CD8-positive, alpha-beta T cell (primary cell): ENCODE measurements at regions of chr11 and their contacts with region 1.

Region 1: DNA sequence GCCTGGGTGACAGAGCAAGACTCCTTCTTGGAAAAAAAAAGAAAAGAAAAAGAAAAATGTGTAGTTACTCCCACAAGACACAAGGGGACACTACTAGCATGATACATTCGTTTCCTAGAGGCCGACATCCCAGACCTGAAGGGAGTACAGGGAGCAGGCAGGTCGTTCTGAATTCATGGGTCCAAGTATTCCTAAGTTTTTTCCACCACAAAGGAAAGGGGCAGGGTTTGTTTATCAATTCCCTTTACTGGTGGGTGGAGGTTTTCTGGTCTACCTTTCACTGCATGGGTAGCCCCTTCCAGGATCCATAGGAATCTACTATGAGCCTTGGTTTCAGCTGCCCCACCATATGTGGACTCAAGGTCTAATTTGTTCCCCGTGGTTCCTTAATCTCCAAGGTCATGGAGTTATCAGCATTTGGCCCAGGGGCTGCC is 11.8 kb downstream of the TIGD3 start:
- DNase-seq: peak in 3 of 9 experiments; percentile 31 to 80 (median 70)
- ATAC-seq: peak; percentile 92
- H3K4me3 ChIP-seq: no peak overlapping the region
- H3K4me3 Mint-ChIP-seq: no peak overlapping the region
- H3K27ac ChIP-seq: no peak overlapping the region
- H3K27ac Mint-ChIP-seq: no peak overlapping the region
- H3K4me1 ChIP-seq: peaks cover 6% of the 10 kb centered on the region
- H3K4me1 Mint-ChIP-seq: peaks cover 5% of the 10 kb centered on the region
- H3K27me3 ChIP-seq: no peaks in the 10 kb centered on the region
- H3K27me3 Mint-ChIP-seq: no peaks in the 10 kb centered on the region
- CTCF ChIP-seq: peak; percentile 81

Region 2: GRCh38 chr11:65013692-65014145 is 352.6 kb before region 1 on chr11:
- CTCF ChIA-PET with region 1: no interaction called
- POLR2A ChIA-PET with region 1: no interaction called
- intact Hi-C with region 1: no loop called
- DNase-seq: peak; percentile 74 to 95 (median 89)
- ATAC-seq: peak; percentile 91
- H3K4me3 ChIP-seq: peak overlapping the region; percentile 73 to 94
- H3K4me3 Mint-ChIP-seq: peak overlapping the region; percentile 88
- H3K27ac ChIP-seq: peak overlapping the region; percentile 87 to 100
- H3K27ac Mint-ChIP-seq: peak overlapping the region; percentile 96
- H3K4me1 ChIP-seq: peaks cover 24% of the 10 kb centered on the region
- H3K4me1 Mint-ChIP-seq: peaks cover 24% of the 10 kb centered on the region
- H3K27me3 ChIP-seq: no peaks in the 10 kb centered on the region
- H3K27me3 Mint-ChIP-seq: no peaks in the 10 kb centered on the region
- CTCF ChIP-seq: peak; percentile 58

Region 3: DNA sequence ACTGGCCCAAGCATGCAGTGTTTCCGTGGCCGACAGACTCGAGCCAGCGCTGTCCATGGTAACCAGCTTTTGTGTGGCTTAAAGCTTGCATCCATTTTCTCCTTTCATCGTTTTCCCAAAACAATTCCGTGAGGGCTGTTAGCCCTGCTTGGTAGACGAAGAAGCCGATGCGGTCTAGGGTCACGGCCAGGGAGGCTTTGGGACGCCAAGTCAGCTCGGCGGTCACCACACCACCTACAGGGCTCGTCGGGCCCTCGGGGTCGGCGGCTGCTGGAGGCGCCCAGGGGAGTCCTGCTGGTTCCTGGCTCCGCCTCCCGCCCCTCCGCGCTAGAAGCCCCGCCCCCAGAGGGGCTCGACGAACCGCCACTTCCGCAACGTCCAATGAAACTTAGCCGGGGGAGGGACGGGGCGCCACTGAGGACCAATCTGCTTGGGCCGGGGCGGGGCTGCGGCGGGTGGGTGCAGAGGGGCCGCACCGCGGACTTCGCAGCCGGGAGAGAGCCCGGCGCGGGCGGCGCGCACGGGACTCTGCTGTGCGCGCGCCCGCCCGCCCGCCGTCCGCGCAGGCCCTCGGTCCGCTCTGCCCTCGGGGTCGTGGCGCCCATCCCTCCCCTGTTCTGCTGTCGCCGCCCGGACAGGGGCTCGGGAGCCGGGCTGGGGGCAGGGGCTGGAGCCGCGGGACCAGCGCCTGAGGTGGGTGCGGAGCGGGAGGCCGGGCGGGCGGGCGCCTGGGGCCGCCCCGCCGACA is 11.9 kb before region 1 on chr11 and contains the start of gene TIGD3:
- CTCF ChIA-PET with region 1: interaction called, 12 read pairs
- POLR2A ChIA-PET with region 1: no interaction called
- intact Hi-C with region 1: no loop called
- DNase-seq: peak; percentile 94 to 99 (median 98)
- ATAC-seq: peak; percentile 97
- H3K4me3 ChIP-seq: peak within 1 kb of the TSS; percentile 49 to 51
- H3K4me3 Mint-ChIP-seq: peak within 1 kb of the TSS; percentile 91
- H3K27ac ChIP-seq: peak within 1 kb of the TSS in 1 of 2 experiments; percentile 58
- H3K27ac Mint-ChIP-seq: peak within 1 kb of the TSS; percentile 81
- H3K4me1 ChIP-seq: peaks cover 6% of the 10 kb centered on the region
- H3K4me1 Mint-ChIP-seq: peaks cover 13% of the 10 kb centered on the region
- H3K27me3 ChIP-seq: no peaks in the 10 kb centered on the region
- H3K27me3 Mint-ChIP-seq: no peaks in the 10 kb centered on the region
- CTCF ChIP-seq: no peak
- total RNA-seq, gene TIGD3: 0.35 to 0.75 TPM

Region 4: GRCh38 chr11:65382033-65382807 is 15.9 kb after region 1 on chr11 and contains the start of gene SLC25A45:
- CTCF ChIA-PET with region 1: interaction called, 4 read pairs
- POLR2A ChIA-PET with region 1: no interaction called
- intact Hi-C with region 1: loop called in 1 of 2 experiments (anchors 2 kb)
- DNase-seq: peak; percentile 77 to 96 (median 92)
- ATAC-seq: peak; percentile 83
- H3K4me3 ChIP-seq: peak within 1 kb of the TSS; percentile 60 to 98
- H3K4me3 Mint-ChIP-seq: peak within 1 kb of the TSS; percentile 87
- H3K27ac ChIP-seq: peak within 1 kb of the TSS; percentile 97 to 100
- H3K27ac Mint-ChIP-seq: peak within 1 kb of the TSS; percentile 99
- H3K4me1 ChIP-seq: peaks cover 54% of the 10 kb centered on the region
- H3K4me1 Mint-ChIP-seq: peaks cover 42% of the 10 kb centered on the region
- H3K27me3 ChIP-seq: no peaks in the 10 kb centered on the region
- H3K27me3 Mint-ChIP-seq: no peaks in the 10 kb centered on the region
- CTCF ChIP-seq: peak; percentile 81
- total RNA-seq, gene SLC25A45: 27.8 to 29.6 TPM

Region 5: DNA sequence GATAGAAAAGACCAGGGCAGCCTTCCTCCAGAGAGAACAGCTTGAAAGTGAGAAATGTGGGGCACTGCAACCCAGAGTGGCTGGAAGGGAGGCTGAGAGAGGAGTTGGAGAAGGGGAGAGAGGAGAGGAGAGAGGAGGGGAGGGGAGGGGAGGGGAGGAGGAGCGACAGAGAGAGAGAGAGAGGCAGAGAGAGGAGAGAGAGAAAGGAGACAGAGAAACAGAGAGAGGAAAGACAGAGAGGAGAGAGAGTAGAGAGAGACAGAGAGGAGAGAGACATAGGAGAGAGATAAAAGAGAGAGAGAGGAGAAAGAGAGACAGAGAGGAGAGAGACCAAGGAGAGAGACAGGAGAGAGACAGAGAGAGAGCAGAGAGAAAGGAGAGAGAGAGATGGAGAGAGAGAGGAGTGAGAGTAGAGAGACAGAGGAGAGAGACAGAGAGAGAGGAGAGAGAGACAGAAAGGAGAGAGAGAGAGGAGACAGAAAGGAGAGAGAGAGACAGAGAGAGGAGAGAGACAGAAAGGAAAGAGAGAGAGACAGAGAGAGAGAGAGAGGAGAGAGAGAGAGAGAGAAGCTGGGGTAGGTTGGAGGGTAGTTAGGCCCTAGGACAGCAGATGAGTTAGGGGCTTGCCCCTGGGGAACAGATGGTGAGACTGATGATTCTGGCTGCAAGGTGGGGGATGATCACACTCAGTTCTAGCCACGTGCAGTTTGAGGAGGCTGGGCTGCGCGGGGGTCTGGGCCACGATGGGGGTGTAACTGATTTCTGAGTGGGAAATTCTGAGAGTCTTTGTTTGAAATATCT is 150.0 kb after region 1 on chr11:
- CTCF ChIA-PET with region 1: interaction called, 49 read pairs
- POLR2A ChIA-PET with region 1: no interaction called
- intact Hi-C with region 1: no loop called
- DNase-seq: peak in 2 of 9 experiments; percentile 14 to 17
- ATAC-seq: no peak
- H3K4me3 ChIP-seq: no peak overlapping the region
- H3K4me3 Mint-ChIP-seq: no peak overlapping the region
- H3K27ac ChIP-seq: no peak overlapping the region
- H3K27ac Mint-ChIP-seq: peak overlapping the region; percentile 74
- H3K4me1 ChIP-seq: peaks cover 5% of the 10 kb centered on the region
- H3K4me1 Mint-ChIP-seq: peaks cover 10% of the 10 kb centered on the region
- H3K27me3 ChIP-seq: no peaks in the 10 kb centered on the region
- H3K27me3 Mint-ChIP-seq: no peaks in the 10 kb centered on the region
- CTCF ChIP-seq: no peak